Activated CD4-positive, alpha-beta memory T cell treated with anti-CD3 and anti-CD28 coated beads for 36 hours (primary cell): ENCODE measurements at regions of chr6 and their contacts with region 1.

Region 1: GRCh38 chr6:90472744-90473143 is 114.1 kb downstream of the MAP3K7 start:
- DNase-seq: peak; percentile 69
- H3K4me3 Mint-ChIP-seq: peak overlapping the region; percentile 54
- H3K27ac Mint-ChIP-seq: peak overlapping the region; percentile 83
- H3K4me1 Mint-ChIP-seq: peaks cover 88% of the 10 kb centered on the region
- H3K27me3 Mint-ChIP-seq: peaks cover 1% of the 10 kb centered on the region

Region 2: DNA sequence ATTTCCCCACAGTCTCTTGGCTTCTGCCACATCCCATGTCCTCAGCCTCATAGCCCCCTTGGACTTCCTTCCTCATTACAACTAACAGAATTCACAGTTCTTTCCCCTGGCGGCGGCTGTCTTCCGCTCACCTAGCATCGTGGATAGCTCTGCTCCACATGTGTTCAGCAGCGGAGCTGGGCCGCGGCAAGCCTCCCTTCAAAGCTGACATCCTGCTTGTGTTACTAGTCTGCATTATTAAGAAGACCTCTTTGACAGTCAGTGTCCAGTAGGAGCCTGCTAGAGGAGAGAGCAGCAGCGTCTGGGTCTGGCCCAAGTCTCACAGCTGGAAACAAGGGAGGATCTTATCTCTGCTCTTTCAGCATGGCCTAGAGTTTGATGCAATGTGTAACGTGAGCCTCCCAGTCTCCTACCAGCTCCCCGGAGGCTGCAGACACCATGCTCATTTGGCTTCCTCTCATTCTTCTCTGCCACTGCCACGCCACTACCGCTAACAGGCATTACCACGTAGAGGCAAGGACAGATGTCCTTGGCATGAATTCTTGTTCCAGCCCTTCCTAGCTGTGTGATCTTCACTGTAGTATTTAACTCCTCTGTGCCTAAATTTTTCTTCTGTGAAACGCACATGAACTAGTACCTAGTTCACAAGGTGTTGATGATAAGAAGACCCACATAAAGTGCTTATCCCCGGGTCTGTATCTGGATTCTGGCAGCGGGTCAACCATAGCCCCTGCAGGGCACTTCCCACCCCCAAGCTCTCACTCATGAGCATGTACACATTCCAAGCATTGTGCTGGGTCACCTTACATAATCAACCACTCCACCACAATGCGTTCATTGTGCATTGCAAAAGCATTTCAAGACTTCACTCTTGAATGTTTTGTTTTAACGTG is 69.0 kb before region 1 on chr6:
- CTCF ChIA-PET with region 1: interaction called, 36 read pairs
- POLR2A ChIA-PET with region 1: interaction called, 63 read pairs
- intact Hi-C with region 1: loop called (anchors 1 kb)
- DNase-seq: no peak
- H3K4me3 Mint-ChIP-seq: peak overlapping the region; percentile 64
- H3K27ac Mint-ChIP-seq: peak overlapping the region; percentile 93
- H3K4me1 Mint-ChIP-seq: peaks cover 81% of the 10 kb centered on the region
- H3K27me3 Mint-ChIP-seq: no peaks in the 10 kb centered on the region

Region 3: DNA sequence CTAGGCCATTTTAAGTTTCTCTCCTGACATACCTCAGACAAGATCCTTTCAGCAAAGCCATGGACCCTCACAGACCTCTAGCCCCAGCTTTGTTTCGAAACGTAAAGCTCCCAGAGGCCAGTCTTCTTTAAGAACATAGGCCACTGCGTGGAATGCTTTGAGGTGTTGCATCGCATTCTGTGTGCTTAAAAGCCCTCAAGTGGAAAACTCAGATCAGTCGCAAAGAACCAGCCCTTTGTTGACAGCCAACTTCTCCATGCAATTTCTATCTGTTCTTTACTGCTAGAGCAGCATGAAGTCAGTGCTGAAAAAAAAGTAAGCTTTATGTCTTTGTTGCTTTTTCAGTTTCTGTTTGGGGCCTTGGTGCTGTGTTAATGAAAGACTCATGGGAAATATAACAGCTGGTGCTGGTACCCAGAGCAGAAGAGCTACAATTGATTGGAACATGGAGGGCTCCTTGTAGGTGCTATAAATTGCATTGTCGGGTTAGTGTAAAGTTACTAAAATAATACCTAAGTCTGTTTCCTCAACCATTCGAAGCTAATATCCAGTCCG is 28.5 kb before region 1 on chr6:
- CTCF ChIA-PET with region 1: interaction called, 3 read pairs
- POLR2A ChIA-PET with region 1: interaction called, 3 read pairs
- intact Hi-C with region 1: loop called (anchors 1 kb)
- DNase-seq: no peak
- H3K4me3 Mint-ChIP-seq: peak overlapping the region; percentile 48
- H3K27ac Mint-ChIP-seq: peak overlapping the region; percentile 92
- H3K4me1 Mint-ChIP-seq: peaks cover 47% of the 10 kb centered on the region
- H3K27me3 Mint-ChIP-seq: no peaks in the 10 kb centered on the region

Region 4: DNA sequence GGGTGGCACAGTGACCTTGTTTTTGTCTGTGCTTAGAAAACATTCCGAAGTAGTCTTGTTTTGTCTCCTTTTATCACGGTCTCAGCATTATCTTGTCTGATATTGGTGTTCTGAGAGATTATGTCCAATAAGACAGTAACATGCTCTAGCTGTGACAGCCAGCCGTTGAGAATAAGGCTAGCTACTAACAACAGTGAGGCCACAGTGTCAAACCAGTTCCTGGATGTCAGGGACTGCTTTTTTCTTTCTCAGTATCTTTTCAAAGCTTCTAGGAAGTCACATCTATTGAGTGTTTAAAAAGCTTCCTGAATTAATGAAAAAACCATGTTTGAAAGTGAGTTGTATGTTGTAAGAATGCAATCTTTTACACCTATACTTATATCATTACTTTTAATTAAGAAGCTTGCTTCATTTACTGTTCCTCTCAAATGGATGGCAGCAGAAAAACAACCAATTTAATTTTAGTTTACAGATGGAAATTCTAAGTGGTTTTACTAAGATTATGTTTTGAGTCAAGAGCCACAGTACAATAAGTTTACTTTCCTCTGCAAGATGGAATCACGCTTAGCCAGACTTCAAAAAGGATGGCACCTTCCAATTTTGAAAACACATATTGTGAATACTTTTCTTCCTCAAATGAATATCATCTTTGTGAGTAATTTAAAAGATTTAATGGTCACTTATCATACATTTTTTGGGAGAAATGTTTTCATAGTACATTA is 61.0 kb after region 1 on chr6:
- CTCF ChIA-PET with region 1: no interaction called
- POLR2A ChIA-PET with region 1: no interaction called
- intact Hi-C with region 1: no loop called
- DNase-seq: no peak
- H3K4me3 Mint-ChIP-seq: no peak overlapping the region
- H3K27ac Mint-ChIP-seq: no peak overlapping the region
- H3K4me1 Mint-ChIP-seq: peaks cover 5% of the 10 kb centered on the region
- H3K27me3 Mint-ChIP-seq: no peaks in the 10 kb centered on the region

Region 5: GRCh38 chr6:90574610-90575009 is 101.9 kb after region 1 on chr6:
- CTCF ChIA-PET with region 1: no interaction called
- POLR2A ChIA-PET with region 1: no interaction called
- intact Hi-C with region 1: no loop called
- DNase-seq: no peak
- H3K4me3 Mint-ChIP-seq: no peak overlapping the region
- H3K27ac Mint-ChIP-seq: no peak overlapping the region
- H3K4me1 Mint-ChIP-seq: peaks cover 5% of the 10 kb centered on the region
- H3K27me3 Mint-ChIP-seq: no peaks in the 10 kb centered on the region